ENCODE measurements at regions of chr5 and their contacts with region 1.

Region 1: DNA sequence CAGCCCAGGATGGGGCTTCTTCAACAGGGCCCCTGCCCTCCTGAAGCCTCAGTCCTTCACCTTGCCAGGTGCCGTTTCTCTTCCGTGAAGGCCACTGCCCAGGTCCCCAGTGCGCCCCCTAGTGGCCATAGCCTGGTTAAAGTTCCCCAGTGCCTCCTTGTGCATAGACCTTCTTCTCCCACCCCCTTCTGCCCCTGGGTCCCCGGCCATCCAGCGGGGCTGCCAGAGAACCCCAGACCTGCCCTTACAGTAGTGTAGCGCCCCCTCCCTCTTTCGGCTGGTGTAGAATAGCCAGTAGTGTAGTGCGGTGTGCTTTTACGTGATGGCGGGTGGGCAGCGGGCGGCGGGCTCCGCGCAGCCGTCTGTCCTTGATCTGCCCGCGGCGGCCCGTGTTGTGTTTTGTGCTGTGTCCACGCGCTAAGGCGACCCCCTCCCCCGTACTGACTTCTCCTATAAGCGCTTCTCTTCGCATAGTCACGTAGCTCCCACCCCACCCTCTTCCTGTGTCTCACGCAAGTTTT is 23.6 kb downstream of the PCDHGC5 start:
- DNase-seq: no peak
- H3K4me3 ChIP-seq: no peak overlapping the region
- H3K27ac ChIP-seq: peak overlapping the region; percentile 80
- H3K27me3 ChIP-seq: no peaks in the 10 kb centered on the region
- CTCF ChIP-seq: peak; percentile 83

Region 2: DNA sequence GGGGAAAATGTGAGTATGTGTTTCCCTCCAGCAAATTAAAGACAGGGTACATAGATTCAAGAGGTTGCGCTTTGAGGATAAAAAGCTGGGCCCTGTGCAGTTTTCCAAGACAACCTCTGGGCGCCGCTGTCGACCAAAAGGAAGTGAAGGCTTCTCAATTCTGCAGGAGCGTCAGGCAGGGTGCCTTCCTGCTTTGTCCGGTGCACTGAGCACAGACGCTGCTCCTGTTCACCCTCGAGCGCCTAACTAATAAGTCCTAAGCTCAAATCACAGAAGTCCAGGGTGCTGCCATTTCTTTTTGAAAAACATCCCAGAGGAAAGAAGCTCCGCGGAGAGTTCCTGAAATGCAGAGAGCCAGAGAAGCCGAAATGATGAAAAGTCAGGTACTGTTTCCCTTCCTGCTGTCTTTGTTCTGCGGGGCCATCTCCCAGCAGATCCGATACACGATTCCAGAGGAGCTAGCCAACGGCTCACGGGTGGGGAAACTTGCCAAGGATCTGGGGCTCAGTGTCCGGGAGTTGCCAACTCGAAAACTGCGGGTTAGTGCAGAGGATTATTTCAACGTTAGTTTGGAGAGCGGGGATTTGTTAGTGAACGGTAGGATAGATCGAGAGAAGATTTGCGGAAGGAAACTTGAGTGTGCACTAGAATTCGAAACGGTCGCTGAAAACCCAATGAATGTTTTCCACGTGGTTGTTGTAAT is 162.4 kb before region 1 on chr5 and contains the start of gene PCDHGB1:
- CTCF ChIA-PET with region 1: no interaction called
- POLR2A ChIA-PET with region 1: no interaction called
- DNase-seq: no peak
- H3K4me3 ChIP-seq: peak within 1 kb of the TSS; percentile 46
- H3K27ac ChIP-seq: no peak within 1 kb of the TSS
- H3K27me3 ChIP-seq: peaks cover 2% of the 10 kb centered on the region
- CTCF ChIP-seq: peak; percentile 54
- polyA plus RNA-seq, gene PCDHGB1: 3.2 TPM in 2 replicates

Region 3: GRCh38 chr5:141475625-141476131 is 36.8 kb before region 1 on chr5 and contains the start of gene PCDHGC3:
- CTCF ChIA-PET with region 1: interaction called, 10 read pairs
- POLR2A ChIA-PET with region 1: interaction called, 23 read pairs
- DNase-seq: peak; percentile 90
- H3K4me3 ChIP-seq: peak within 1 kb of the TSS; percentile 82
- H3K27ac ChIP-seq: peak within 1 kb of the TSS; percentile 81
- H3K27me3 ChIP-seq: no peaks in the 10 kb centered on the region
- CTCF ChIP-seq: peak; percentile 20
- polyA plus RNA-seq, gene PCDHGC3: 47.4 and 61.1 TPM in 2 replicates

Region 4: DNA sequence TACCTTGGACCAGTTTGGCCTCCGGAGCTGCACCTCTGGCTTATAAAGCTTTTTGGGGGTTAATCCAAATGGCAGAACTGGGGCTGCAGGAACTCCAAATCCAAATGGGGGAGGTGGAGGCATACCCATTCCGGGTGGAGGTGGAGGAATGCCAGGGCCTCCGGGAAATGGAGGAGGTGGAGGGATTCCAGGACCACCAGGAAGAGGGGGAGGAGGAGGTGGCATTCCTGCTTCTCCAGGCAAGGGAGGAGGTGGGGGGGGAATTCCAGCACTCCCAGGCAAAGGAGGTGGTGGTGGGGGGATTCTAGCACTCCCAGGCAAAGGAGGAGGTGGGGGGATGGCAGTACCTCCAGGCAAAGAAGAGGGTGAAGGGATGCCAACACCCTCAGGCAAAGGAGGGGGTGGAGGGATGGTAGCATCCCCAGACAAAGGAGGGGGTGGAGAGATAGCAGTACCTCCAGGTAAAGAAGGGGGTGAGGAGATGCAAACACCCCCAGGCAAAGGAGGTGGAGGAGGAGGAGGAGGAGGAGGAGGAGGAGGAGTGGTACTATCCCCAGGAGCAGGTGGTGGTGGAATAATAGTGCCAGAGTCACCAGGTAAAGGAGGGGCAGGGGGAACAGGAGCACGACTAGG is 61.2 kb after region 1 on chr5:
- CTCF ChIA-PET with region 1: no interaction called
- POLR2A ChIA-PET with region 1: no interaction called
- DNase-seq: no peak
- H3K4me3 ChIP-seq: no peak overlapping the region
- H3K27ac ChIP-seq: no peak overlapping the region
- H3K27me3 ChIP-seq: no peaks in the 10 kb centered on the region
- CTCF ChIP-seq: no peak